ENCODE measurements at regions of chr20 and their contacts with region 1.

Region 1: DNA sequence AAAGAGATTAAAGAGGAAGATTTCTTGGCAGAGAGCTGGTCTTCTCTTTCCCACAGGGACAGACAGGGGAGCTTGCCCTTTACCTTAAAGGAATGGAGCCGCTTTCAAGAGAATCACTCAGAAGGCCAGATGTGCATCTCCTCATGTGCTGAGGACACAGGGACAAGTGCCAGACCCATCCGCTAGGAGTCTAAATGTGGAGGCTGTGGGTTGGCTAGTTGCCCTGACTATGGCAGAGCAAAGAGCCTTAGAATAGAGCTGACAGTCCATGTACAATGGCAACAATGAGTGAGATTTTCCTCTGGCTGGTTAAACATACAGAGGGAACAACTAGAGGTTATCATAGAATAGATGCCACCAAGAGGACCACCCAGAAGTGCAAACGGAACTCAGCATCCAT is 7.3 kb upstream of the DOK5 start:
- DNase-seq: peak in 1 of 2 donors; percentile 27
- ATAC-seq: peak in 5 of 8 donors; percentile 42 to 56 (median 45)
- H3K4me3 ChIP-seq: no peak overlapping the region
- H3K27ac ChIP-seq: no peak overlapping the region
- H3K4me1 ChIP-seq: peaks cover 0 to 13% (median 0%) of the 10 kb centered on the region in 9 donors
- H3K27me3 ChIP-seq: peaks cover 0 to under 1% (median 0%) of the 10 kb centered on the region in 7 donors
- CTCF ChIP-seq: no peak

Region 2: GRCh38 chr20:54219751-54220426 is 248.2 kb before region 1 on chr20:
- intact Hi-C with region 1: loop called in 2 of 10 experiments (anchors 10 kb)
- DNase-seq: no peak
- ATAC-seq: no peak
- H3K4me3 ChIP-seq: no peak overlapping the region
- H3K27ac ChIP-seq: no peak overlapping the region
- H3K4me1 ChIP-seq: peaks cover 0 to 43% (median 22%) of the 10 kb centered on the region in 9 donors
- H3K27me3 ChIP-seq: no peaks in the 10 kb centered on the region
- CTCF ChIP-seq: peak; percentile 29 to 74 (median 59)

Region 3: GRCh38 chr20:54515862-54516628 is 48.0 kb after region 1 on chr20:
- intact Hi-C with region 1: no loop called
- DNase-seq: no peak
- ATAC-seq: no peak
- H3K4me3 ChIP-seq: no peak overlapping the region
- H3K27ac ChIP-seq: no peak overlapping the region
- H3K4me1 ChIP-seq: peaks cover 0 to 3% (median 0%) of the 10 kb centered on the region in 9 donors
- H3K27me3 ChIP-seq: no peaks in the 10 kb centered on the region
- CTCF ChIP-seq: no peak

Region 4: GRCh38 chr20:54545689-54546517 is 77.8 kb after region 1 on chr20:
- intact Hi-C with region 1: no loop called
- DNase-seq: no peak
- ATAC-seq: no peak
- H3K4me3 ChIP-seq: no peak overlapping the region
- H3K27ac ChIP-seq: no peak overlapping the region
- H3K4me1 ChIP-seq: no peaks in the 10 kb centered on the region
- H3K27me3 ChIP-seq: no peaks in the 10 kb centered on the region
- CTCF ChIP-seq: no peak